ENCODE measurements at regions of chr6 and their contacts with region 1.

Region 1: DNA sequence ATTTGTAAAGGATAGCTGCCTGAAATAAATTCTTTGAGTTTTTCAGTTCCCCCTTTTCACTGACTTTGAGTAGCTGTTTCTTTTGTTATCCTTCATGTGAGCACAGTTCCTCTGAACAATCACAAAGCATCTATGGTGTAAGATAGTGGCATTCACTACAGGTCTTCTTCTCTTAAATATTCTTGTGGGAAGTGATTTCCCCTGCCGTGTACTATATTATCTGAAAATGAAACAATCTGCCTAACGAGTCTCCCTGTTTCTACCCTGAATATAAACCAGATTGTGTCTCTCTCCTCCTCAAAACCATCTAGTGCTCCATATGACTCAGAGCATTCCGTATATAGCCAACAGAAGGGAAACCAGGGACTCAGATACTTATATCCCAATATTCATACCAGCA is 380.1 kb upstream of the SOX4 start:
- DNase-seq: no peak
- ATAC-seq: no peak
- H3K4me3 ChIP-seq: no peak overlapping the region
- H3K4me3 Mint-ChIP-seq: no peak overlapping the region
- H3K27ac ChIP-seq: no peak overlapping the region
- H3K27ac Mint-ChIP-seq: no peak overlapping the region
- H3K4me1 ChIP-seq: no peaks in the 10 kb centered on the region
- H3K4me1 Mint-ChIP-seq: no peaks in the 10 kb centered on the region
- H3K27me3 ChIP-seq: no peaks in the 10 kb centered on the region
- H3K27me3 Mint-ChIP-seq: no peaks in the 10 kb centered on the region

Region 2: DNA sequence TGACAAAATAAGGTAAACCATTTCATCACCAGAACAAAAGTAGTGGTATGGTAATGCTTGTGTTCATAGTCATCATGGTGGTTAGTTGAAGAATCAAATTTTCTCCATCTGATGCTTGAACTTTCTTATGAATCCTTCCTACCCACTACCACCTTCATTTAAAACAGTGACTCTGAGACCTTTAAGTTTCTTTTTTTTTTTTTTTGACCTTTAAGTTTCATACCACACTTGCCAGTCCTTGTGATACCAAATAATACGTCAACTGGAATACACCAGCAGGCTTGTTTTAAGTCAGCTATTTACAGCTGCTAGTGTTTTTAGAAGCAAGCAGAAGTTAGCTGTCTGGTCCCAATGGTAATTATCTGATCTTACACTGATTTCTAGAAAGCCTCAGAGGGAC is 33.3 kb before region 1 on chr6:
- CTCF ChIA-PET with region 1: no interaction called
- POLR2A ChIA-PET with region 1: no interaction called
- DNase-seq: no peak
- ATAC-seq: no peak
- H3K4me3 ChIP-seq: no peak overlapping the region
- H3K4me3 Mint-ChIP-seq: no peak overlapping the region
- H3K27ac ChIP-seq: no peak overlapping the region
- H3K27ac Mint-ChIP-seq: no peak overlapping the region
- H3K4me1 ChIP-seq: no peaks in the 10 kb centered on the region
- H3K4me1 Mint-ChIP-seq: no peaks in the 10 kb centered on the region
- H3K27me3 ChIP-seq: no peaks in the 10 kb centered on the region
- H3K27me3 Mint-ChIP-seq: no peaks in the 10 kb centered on the region

Region 3: GRCh38 chr6:21225912-21226311 is 12.4 kb after region 1 on chr6:
- CTCF ChIA-PET with region 1: no interaction called
- POLR2A ChIA-PET with region 1: interaction called in 1 of 2 experiments, 10 read pairs
- DNase-seq: no peak
- ATAC-seq: no peak
- H3K4me3 ChIP-seq: no peak overlapping the region
- H3K4me3 Mint-ChIP-seq: no peak overlapping the region
- H3K27ac ChIP-seq: no peak overlapping the region
- H3K27ac Mint-ChIP-seq: no peak overlapping the region
- H3K4me1 ChIP-seq: no peaks in the 10 kb centered on the region
- H3K4me1 Mint-ChIP-seq: no peaks in the 10 kb centered on the region
- H3K27me3 ChIP-seq: no peaks in the 10 kb centered on the region
- H3K27me3 Mint-ChIP-seq: no peaks in the 10 kb centered on the region

Region 4: GRCh38 chr6:21257125-21257524 is 43.6 kb after region 1 on chr6:
- CTCF ChIA-PET with region 1: no interaction called
- POLR2A ChIA-PET with region 1: no interaction called
- DNase-seq: no peak
- ATAC-seq: no peak
- H3K4me3 ChIP-seq: no peak overlapping the region
- H3K4me3 Mint-ChIP-seq: no peak overlapping the region
- H3K27ac ChIP-seq: no peak overlapping the region
- H3K27ac Mint-ChIP-seq: no peak overlapping the region
- H3K4me1 ChIP-seq: no peaks in the 10 kb centered on the region
- H3K4me1 Mint-ChIP-seq: no peaks in the 10 kb centered on the region
- H3K27me3 ChIP-seq: peaks cover 0 to 6% of the 10 kb centered on the region in 2 experiments
- H3K27me3 Mint-ChIP-seq: peaks cover 4% of the 10 kb centered on the region in 2 donors